HepG2 (cell line): ENCODE measurements at regions of chr16 and their contacts with region 1.

Region 1: GRCh38 chr16:69839798-69840409 is 77.8 kb downstream of the WWP2 start:
- DNase-seq: peak; percentile 81
- ATAC-seq: peak; percentile 81
- H3K4me3 ChIP-seq: peak overlapping the region in 2 of 3 experiments; percentile 2 to 9; a peak in 2 of 6 replicates
- H3K27ac ChIP-seq: peak overlapping the region; percentile 82
- H3K4me1 ChIP-seq: peaks cover 69% of the 10 kb centered on the region
- H3K27me3 ChIP-seq: no peaks in the 10 kb centered on the region
- CTCF ChIP-seq: no peak
- EP300 ChIP-seq: peak in 1 of 2 experiments; percentile 60; a peak in 2 of 4 replicates
- POLR2A ChIP-seq: no peak
- RAD21 ChIP-seq: no peak

Region 2: GRCh38 chr16:69712914-69713581 is 126.9 kb before region 1 on chr16:
- CTCF ChIA-PET with region 1: no interaction called
- POLR2A ChIA-PET with region 1: no interaction called
- in situ Hi-C with region 1: no loop called
- intact Hi-C with region 1: no loop called
- DNase-seq: no peak
- ATAC-seq: peak; percentile 33
- H3K4me3 ChIP-seq: no peak overlapping the region
- H3K27ac ChIP-seq: no peak overlapping the region
- H3K4me1 ChIP-seq: 0 out of 2 replicates have a peak, but pooled peaks cover 1% of the 10 kb centered on the region
- H3K27me3 ChIP-seq: no peaks in the 10 kb centered on the region
- CTCF ChIP-seq: no peak
- EP300 ChIP-seq: no peak
- POLR2A ChIP-seq: peak in 1 of 2 experiments; percentile 34; a peak in 1 of 4 replicates
- RAD21 ChIP-seq: no peak

Region 3: DNA sequence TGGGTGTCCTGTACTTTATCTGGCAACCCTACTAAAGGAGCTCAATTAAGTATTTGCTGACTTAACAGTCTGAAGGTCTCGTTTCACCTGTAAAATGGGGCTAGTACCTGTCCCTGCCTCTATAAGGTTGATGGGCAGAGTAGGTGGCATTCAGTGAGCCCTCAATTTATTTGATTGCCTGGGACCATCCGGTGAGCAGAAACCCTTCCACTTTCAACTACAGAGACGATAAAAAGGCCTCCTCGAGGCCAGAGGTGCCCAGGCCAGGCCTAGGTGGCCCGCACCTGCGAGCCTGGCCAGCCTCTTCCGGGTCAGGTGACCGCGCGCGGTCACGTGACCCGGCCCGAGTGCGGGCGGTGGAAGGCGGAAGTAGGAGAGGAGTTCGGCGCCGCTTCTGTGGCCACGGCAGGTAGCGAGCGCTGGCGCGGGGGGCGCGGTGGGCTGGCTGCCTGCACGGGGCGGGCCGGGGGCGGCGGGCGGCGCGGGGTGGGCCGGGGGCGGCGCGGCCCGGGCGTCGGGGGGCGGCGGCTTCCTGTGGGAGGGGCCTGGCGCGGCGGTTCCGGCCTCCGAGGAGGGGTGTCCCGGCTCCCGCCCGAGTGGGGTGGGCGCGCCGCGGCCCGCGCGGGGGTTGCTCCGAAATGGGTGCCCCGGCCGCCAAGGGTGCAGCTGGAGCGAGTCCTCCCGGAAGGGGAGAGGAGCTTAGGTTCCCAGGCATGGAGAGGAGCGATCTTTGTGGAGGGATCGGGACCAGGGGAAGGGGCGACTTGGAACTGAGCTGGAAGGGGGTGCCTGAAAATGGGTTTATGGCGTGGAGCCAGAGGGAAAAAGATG is 77.7 kb before region 1 on chr16 and contains the start of gene WWP2:
- CTCF ChIA-PET with region 1: no interaction called
- POLR2A ChIA-PET with region 1: no interaction called
- in situ Hi-C with region 1: no loop called
- intact Hi-C with region 1: no loop called
- DNase-seq: peak; percentile 77
- ATAC-seq: peak; percentile 86
- H3K4me3 ChIP-seq: peak within 1 kb of the TSS; percentile 95 to 99 (median 95)
- H3K27ac ChIP-seq: peak within 1 kb of the TSS; percentile 85
- H3K4me1 ChIP-seq: peaks cover 52% of the 10 kb centered on the region
- H3K27me3 ChIP-seq: no peaks in the 10 kb centered on the region; a peak in 2 of 5 replicates
- CTCF ChIP-seq: no peak
- EP300 ChIP-seq: no peak
- POLR2A ChIP-seq: peak; percentile 69 to 90
- RAD21 ChIP-seq: peak; percentile 53
- total RNA-seq, gene WWP2: 28.2 and 31.9 TPM in 2 replicates

Region 4: GRCh38 chr16:69796351-69797118 is 43.4 kb before region 1 on chr16:
- CTCF ChIA-PET with region 1: no interaction called
- POLR2A ChIA-PET with region 1: no interaction called
- in situ Hi-C with region 1: no loop called
- intact Hi-C with region 1: no loop called
- DNase-seq: peak; percentile 74
- ATAC-seq: peak; percentile 85
- H3K4me3 ChIP-seq: no peak overlapping the region
- H3K27ac ChIP-seq: no peak overlapping the region
- H3K4me1 ChIP-seq: peaks cover 5% of the 10 kb centered on the region
- H3K27me3 ChIP-seq: no peaks in the 10 kb centered on the region; a peak in 1 of 5 replicates
- CTCF ChIP-seq: peak; percentile 94
- EP300 ChIP-seq: no peak
- POLR2A ChIP-seq: no peak
- RAD21 ChIP-seq: peak; percentile 96

Region 5: DNA sequence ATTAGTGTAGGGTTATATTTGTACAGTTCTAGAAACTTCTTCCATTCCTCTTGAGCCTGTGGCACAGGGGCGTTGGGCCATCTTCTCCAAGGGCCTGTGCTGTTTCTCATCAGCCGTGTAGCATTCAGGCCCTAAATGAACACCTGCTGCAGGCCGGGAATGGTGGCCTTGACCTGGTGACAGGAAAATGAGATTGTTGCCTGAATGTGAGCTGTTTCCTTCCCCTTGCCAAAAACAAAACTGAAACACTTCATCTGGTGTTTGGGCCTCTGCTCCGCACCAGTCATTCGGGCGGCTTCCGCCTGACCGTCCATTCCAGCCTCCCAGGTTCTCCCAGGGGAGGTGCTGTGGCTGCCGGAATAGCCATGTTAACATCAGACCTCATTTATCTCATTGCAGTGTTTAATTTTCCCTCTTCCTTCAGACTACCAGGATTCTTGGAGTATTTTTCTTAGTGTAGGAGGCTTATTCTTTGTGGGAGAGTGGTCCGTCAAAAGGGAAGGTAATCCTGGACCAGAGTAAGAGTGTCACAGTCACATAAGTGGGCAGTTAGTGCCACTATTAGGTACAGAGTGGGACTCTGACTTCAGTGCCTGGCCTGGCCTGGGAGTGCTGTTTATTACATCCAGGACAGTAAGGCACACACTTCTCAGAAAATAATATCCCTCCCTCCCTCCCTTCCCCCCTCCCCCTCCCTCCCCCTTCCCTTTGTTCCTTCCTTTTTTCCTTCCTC is 15.9 kb before region 1 on chr16:
- CTCF ChIA-PET with region 1: no interaction called
- POLR2A ChIA-PET with region 1: interaction called, 23 read pairs
- in situ Hi-C with region 1: no loop called
- intact Hi-C with region 1: no loop called
- DNase-seq: no peak
- ATAC-seq: peak; percentile 47
- H3K4me3 ChIP-seq: no peak overlapping the region
- H3K27ac ChIP-seq: peak overlapping the region; percentile 51
- H3K4me1 ChIP-seq: peaks cover 88% of the 10 kb centered on the region
- H3K27me3 ChIP-seq: no peaks in the 10 kb centered on the region
- CTCF ChIP-seq: 0 out of 2 replicates have a peak, but pooled peaks have one; percentile 10
- EP300 ChIP-seq: peak in 1 of 2 experiments; percentile 63; a peak in 2 of 4 replicates
- POLR2A ChIP-seq: no peak
- RAD21 ChIP-seq: no peak